Activated CD8-positive, alpha-beta T cell treated with anti-CD3 and anti-CD28 coated beads for 36 hours (primary cell): ENCODE measurements at regions of chr20 and their contacts with region 1.

Region 1: DNA sequence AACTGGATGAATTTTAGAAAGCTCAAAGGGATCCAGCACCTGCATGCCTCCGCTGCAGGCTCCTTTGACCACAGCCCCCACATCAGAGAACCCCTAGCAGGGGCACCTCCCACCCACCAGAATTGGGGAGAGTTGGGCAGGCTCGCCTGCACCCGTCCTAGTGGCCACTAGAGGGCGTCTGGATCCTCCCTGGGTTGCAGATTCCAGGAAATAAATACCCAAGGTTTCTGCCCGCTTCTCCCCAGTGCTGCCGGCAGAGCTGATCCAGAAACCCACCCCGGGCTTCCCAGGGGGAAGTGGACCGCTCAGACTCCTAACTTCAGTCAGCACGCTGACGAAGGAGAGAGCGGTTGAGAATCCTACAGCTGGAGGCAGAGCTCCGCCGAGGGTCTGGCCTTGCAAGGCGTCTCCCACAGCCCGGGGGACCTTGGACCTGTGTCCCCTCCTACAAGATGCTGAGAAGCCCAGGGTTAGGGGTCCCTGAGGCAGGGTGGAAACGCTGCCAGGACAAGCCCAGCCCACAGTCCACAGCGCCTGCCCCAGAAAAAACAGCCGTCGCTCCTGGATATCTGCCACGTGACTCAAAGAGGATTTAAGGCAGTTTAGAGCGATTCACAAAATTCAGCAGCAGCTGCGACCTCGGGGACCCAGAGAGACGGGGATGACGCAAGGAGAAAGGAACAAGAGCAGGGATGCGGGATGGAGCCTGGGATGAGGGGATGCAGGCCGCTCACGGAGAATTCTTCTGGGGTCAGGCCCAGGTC is 32.6 kb upstream of the PHACTR3 start:
- DNase-seq: peak; percentile 69
- ATAC-seq: peak; percentile 86
- H3K4me3 Mint-ChIP-seq: peak overlapping the region; percentile 25
- H3K27ac Mint-ChIP-seq: no peak overlapping the region
- H3K4me1 Mint-ChIP-seq: peaks cover 4% of the 10 kb centered on the region
- H3K27me3 Mint-ChIP-seq: peaks cover 22% of the 10 kb centered on the region
- CTCF ChIP-seq: peak; percentile 94

Region 2: DNA sequence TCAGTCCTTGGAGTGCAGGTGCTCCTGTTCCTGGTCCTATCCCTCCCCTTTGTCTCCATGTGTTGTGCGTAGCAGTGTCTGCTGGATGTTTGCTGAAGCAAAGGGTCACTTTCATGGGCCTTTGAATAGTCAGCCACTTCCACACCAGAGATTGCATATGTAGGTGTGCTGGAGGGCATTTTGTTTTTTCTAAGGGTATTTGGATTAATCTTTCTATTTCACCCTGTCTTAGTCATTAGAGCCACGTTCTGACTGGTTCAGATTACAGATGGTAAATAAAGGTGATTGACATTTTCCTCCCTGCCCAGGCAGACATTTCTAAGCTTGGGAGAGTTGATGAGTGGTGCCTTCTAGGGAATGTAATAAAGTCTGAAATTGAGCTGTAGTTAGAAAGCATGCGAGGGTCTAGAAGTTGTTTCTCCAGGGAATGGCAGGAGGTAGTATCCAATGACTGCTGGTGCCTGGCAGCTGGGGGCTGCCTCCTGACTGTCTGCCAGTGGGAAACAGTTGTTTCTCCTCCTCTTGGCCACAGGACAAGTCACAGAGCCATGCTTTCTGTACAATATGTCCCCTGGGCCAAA is 256.8 kb before region 1 on chr20:
- CTCF ChIA-PET with region 1: no interaction called
- POLR2A ChIA-PET with region 1: no interaction called
- intact Hi-C with region 1: no loop called
- DNase-seq: no peak
- ATAC-seq: no peak
- H3K4me3 Mint-ChIP-seq: no peak overlapping the region
- H3K27ac Mint-ChIP-seq: no peak overlapping the region
- H3K4me1 Mint-ChIP-seq: no peaks in the 10 kb centered on the region
- H3K27me3 Mint-ChIP-seq: no peaks in the 10 kb centered on the region
- CTCF ChIP-seq: no peak

Region 3: DNA sequence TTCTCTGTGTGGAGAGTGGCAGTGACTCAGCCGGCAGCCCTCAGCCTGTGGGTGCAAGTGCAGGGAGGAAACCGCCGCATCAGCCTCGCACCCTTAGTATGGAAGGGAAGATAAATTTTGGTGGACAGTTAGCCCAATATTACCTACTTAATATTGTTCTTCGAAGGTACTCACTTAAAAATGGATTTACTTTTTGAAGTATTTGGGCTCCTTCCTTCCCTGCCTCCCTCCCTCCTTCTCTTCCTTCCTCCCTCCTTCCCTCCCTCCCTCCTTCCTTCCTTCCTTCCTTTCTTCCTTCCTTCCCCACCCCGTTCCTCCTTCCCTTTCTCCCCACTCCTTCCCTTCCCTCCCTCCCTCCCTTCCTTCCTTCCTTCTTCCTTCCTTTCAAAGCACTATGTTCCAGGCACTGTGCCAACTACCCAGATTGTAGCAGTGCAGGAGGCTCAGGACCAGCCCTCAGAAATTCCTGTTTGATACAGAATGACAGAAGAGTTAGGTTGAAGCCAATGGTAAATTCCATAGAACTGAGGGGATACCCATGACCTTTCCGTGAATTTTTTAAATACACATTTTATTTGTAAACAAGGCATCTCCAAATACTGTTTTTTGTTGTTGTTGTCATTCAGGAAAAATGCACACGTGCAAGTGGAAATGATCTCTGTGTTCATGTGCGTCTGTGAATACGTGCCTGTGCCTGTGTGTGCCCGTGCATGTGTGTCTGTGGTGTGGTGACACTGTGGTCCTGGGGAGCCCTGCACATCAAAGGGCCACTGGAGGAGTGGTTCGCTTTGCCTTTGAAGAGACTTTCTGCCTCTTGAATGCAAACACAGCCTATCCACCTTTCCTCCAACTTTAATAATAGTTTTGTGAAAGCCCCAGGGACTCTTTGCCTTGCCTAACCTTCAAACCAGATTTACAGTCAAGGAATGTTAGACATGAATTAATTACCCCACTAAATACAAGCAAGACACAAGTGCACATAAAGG is 129.6 kb before region 1 on chr20:
- CTCF ChIA-PET with region 1: no interaction called
- POLR2A ChIA-PET with region 1: no interaction called
- intact Hi-C with region 1: no loop called
- DNase-seq: peak; percentile 11
- ATAC-seq: no peak
- H3K4me3 Mint-ChIP-seq: no peak overlapping the region
- H3K27ac Mint-ChIP-seq: no peak overlapping the region
- H3K4me1 Mint-ChIP-seq: peaks cover 6% of the 10 kb centered on the region
- H3K27me3 Mint-ChIP-seq: peaks cover 41% of the 10 kb centered on the region
- CTCF ChIP-seq: no peak

Region 4: GRCh38 chr20:59495894-59496510 is 75.7 kb before region 1 on chr20:
- CTCF ChIA-PET with region 1: no interaction called
- POLR2A ChIA-PET with region 1: no interaction called
- intact Hi-C with region 1: no loop called
- DNase-seq: peak; percentile 76
- ATAC-seq: peak; percentile 61
- H3K4me3 Mint-ChIP-seq: no peak overlapping the region
- H3K27ac Mint-ChIP-seq: no peak overlapping the region
- H3K4me1 Mint-ChIP-seq: no peaks in the 10 kb centered on the region
- H3K27me3 Mint-ChIP-seq: peaks cover 23% of the 10 kb centered on the region
- CTCF ChIP-seq: peak; percentile 88

Region 5: GRCh38 chr20:59560588-59561227 is 11.0 kb before region 1 on chr20:
- CTCF ChIA-PET with region 1: interaction called, 59 read pairs
- POLR2A ChIA-PET with region 1: interaction called, 4 read pairs
- intact Hi-C with region 1: no loop called
- DNase-seq: no peak
- ATAC-seq: no peak
- H3K4me3 Mint-ChIP-seq: no peak overlapping the region
- H3K27ac Mint-ChIP-seq: no peak overlapping the region
- H3K4me1 Mint-ChIP-seq: no peaks in the 10 kb centered on the region
- H3K27me3 Mint-ChIP-seq: peaks cover 2% of the 10 kb centered on the region
- CTCF ChIP-seq: peak; percentile 67

Region 6: GRCh38 chr20:59583428-59584045 is 11.8 kb after region 1 on chr20:
- CTCF ChIA-PET with region 1: interaction called, 37 read pairs
- POLR2A ChIA-PET with region 1: no interaction called
- intact Hi-C with region 1: no loop called
- DNase-seq: no peak
- ATAC-seq: no peak
- H3K4me3 Mint-ChIP-seq: no peak overlapping the region
- H3K27ac Mint-ChIP-seq: no peak overlapping the region
- H3K4me1 Mint-ChIP-seq: peaks cover 7% of the 10 kb centered on the region
- H3K27me3 Mint-ChIP-seq: peaks cover 7% of the 10 kb centered on the region
- CTCF ChIP-seq: no peak

Region 7: GRCh38 chr20:59598625-59599310 is 27.0 kb after region 1 on chr20:
- CTCF ChIA-PET with region 1: interaction called, 24 read pairs
- POLR2A ChIA-PET with region 1: interaction called, 3 read pairs
- intact Hi-C with region 1: no loop called
- DNase-seq: peak; percentile 62
- ATAC-seq: peak; percentile 68
- H3K4me3 Mint-ChIP-seq: no peak overlapping the region
- H3K27ac Mint-ChIP-seq: no peak overlapping the region
- H3K4me1 Mint-ChIP-seq: no peaks in the 10 kb centered on the region
- H3K27me3 Mint-ChIP-seq: peaks cover 26% of the 10 kb centered on the region
- CTCF ChIP-seq: peak; percentile 83